IMR-90 (cell line): ENCODE measurements at regions of chr3 and their contacts with region 1.

Region 1: GRCh38 chr3:149717391-149718056 is 34.8 kb downstream of the COMMD2 start:
- DNase-seq: peak; percentile 82
- ATAC-seq: peak; percentile 85
- H3K4me3 ChIP-seq: no peak overlapping the region
- H3K27ac ChIP-seq: no peak overlapping the region
- H3K4me1 ChIP-seq: no peaks in the 10 kb centered on the region
- H3K27me3 ChIP-seq: no peaks in the 10 kb centered on the region
- CTCF ChIP-seq: peak; percentile 78
- POLR2A ChIP-seq: no peak
- RAD21 ChIP-seq: peak; percentile 81

Region 2: DNA sequence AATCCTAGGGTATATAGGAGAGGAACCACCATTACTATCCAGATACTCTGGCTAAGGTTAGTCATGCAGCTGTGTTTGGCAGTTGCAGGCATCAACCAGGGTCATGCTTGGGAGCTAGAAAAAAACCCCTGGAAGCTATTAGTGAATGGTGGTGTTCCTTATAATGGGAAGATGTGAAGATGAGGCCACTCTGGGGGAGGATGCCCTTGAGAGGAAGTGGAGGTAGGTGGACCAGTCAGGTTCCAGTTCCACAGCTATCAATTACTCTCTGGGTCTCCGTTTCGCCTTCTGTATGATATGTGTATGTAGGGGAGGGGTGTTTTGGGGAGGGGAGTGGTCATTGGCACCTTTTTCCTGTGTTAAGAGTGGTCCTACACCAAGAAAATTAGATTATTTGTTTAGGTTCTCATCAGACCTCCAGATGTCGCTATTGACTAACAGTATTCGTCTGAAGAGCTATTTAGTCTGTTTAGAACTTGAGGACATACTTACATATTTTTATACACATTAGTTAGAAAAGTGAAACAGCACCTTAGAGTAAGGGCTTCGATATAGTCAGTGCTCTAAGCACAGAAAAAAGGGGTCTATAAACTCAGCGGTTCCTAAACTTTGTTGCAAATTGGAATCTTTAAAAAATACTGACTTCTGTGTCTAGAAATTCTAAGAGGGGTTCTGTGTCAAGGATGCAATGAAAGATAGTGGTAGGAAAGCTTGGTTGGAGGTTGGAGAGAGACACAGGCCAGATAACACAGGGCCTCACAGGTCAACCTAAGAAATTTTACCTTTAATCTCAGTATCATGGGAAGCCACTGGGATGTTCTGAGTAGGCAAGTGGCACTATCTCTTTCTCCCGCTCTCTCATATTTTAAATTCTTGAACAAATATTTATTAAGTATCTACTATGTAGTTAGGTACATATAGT is 597.2 kb before region 1 on chr3:
- CTCF ChIA-PET with region 1: no interaction called
- POLR2A ChIA-PET with region 1: no interaction called
- dilution Hi-C with region 1: no loop called
- in situ Hi-C with region 1: loop called (anchors 25 kb)
- intact Hi-C with region 1: no loop called
- DNase-seq: peak; percentile 76
- ATAC-seq: peak; percentile 85
- H3K4me3 ChIP-seq: no peak overlapping the region
- H3K27ac ChIP-seq: no peak overlapping the region
- H3K4me1 ChIP-seq: no peaks in the 10 kb centered on the region
- H3K27me3 ChIP-seq: no peaks in the 10 kb centered on the region
- CTCF ChIP-seq: peak; percentile 79
- POLR2A ChIP-seq: no peak
- RAD21 ChIP-seq: peak; percentile 86

Region 3: GRCh38 chr3:149512209-149512782 is 205.2 kb before region 1 on chr3:
- CTCF ChIA-PET with region 1: interaction called, 3 read pairs
- POLR2A ChIA-PET with region 1: no interaction called
- dilution Hi-C with region 1: no loop called
- in situ Hi-C with region 1: loop called (anchors 5 kb)
- intact Hi-C with region 1: loop called (anchors 1 kb)
- DNase-seq: peak; percentile 72
- ATAC-seq: peak; percentile 80
- H3K4me3 ChIP-seq: no peak overlapping the region
- H3K27ac ChIP-seq: no peak overlapping the region
- H3K4me1 ChIP-seq: peaks cover 8% of the 10 kb centered on the region
- H3K27me3 ChIP-seq: no peaks in the 10 kb centered on the region
- CTCF ChIP-seq: peak; percentile 88
- POLR2A ChIP-seq: no peak
- RAD21 ChIP-seq: peak; percentile 84

Region 4: GRCh38 chr3:149536429-149536828 is 181.1 kb before region 1 on chr3:
- CTCF ChIA-PET with region 1: interaction called, 17 read pairs
- POLR2A ChIA-PET with region 1: no interaction called
- dilution Hi-C with region 1: no loop called
- in situ Hi-C with region 1: no loop called
- intact Hi-C with region 1: no loop called
- DNase-seq: no peak
- ATAC-seq: no peak
- H3K4me3 ChIP-seq: no peak overlapping the region
- H3K27ac ChIP-seq: peak overlapping the region; percentile 27; the same call in 1 of the 2 replicates
- H3K4me1 ChIP-seq: peaks cover 31% of the 10 kb centered on the region
- H3K27me3 ChIP-seq: no peaks in the 10 kb centered on the region
- CTCF ChIP-seq: no peak
- POLR2A ChIP-seq: no peak
- RAD21 ChIP-seq: no peak

Region 5: GRCh38 chr3:149657926-149658733 is 59.4 kb before region 1 on chr3 and contains the start of gene WWTR1:
- CTCF ChIA-PET with region 1: interaction called, 6 read pairs
- POLR2A ChIA-PET with region 1: interaction called, 4 read pairs
- dilution Hi-C with region 1: no loop called
- in situ Hi-C with region 1: no loop called
- intact Hi-C with region 1: loop called (anchors 2 kb)
- DNase-seq: peak; percentile 94
- ATAC-seq: peak; percentile 86
- H3K4me3 ChIP-seq: peak within 1 kb of the TSS; percentile 70
- H3K27ac ChIP-seq: peak within 1 kb of the TSS; percentile 95
- H3K4me1 ChIP-seq: peaks cover 7% of the 10 kb centered on the region
- H3K27me3 ChIP-seq: no peaks in the 10 kb centered on the region
- CTCF ChIP-seq: peak; percentile 42
- POLR2A ChIP-seq: peak; percentile 95
- RAD21 ChIP-seq: peak; percentile 53
- total RNA-seq, gene WWTR1: 30.3 and 38.9 TPM in 2 replicates